Psoas muscle (tissue), 8 donors: ENCODE measurements at regions of chr7 and their contacts with region 1.

Region 1: DNA sequence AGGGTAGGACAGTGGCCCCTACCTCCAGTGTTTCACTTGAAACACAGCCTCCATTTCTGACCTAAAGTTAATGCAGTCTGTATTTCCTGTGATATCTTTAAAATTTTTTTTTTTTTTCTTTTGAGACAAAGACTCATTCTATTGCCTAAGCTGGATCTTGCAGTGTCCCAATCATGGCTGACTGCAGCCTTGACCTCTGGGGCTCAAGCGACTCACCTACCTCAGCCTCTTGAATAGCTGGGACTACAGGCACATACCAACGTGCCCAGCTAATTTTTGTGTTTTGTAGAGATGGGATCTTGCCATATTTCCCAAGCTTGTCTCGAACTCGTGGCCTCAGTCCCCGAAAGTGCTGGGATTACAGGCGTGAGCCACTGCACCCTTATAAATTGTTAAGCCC is 16.7 kb upstream of the MGAM2 start:
- DNase-seq: no peak
- ATAC-seq: no peak
- H3K4me3 ChIP-seq: no peak overlapping the region
- H3K27ac ChIP-seq: no peak overlapping the region
- H3K4me1 ChIP-seq: no peaks in the 10 kb centered on the region
- H3K27me3 ChIP-seq: no peaks in the 10 kb centered on the region
- CTCF ChIP-seq: no peak

Region 2: GRCh38 chr7:142063551-142064442 is 31.1 kb before region 1 on chr7:
- intact Hi-C with region 1: loop called (anchors 1 to 2 kb)
- DNase-seq: no peak
- ATAC-seq: no peak
- H3K4me3 ChIP-seq: no peak overlapping the region
- H3K27ac ChIP-seq: no peak overlapping the region
- H3K4me1 ChIP-seq: no peaks in the 10 kb centered on the region
- H3K27me3 ChIP-seq: no peaks in the 10 kb centered on the region
- CTCF ChIP-seq: no peak

Region 3: DNA sequence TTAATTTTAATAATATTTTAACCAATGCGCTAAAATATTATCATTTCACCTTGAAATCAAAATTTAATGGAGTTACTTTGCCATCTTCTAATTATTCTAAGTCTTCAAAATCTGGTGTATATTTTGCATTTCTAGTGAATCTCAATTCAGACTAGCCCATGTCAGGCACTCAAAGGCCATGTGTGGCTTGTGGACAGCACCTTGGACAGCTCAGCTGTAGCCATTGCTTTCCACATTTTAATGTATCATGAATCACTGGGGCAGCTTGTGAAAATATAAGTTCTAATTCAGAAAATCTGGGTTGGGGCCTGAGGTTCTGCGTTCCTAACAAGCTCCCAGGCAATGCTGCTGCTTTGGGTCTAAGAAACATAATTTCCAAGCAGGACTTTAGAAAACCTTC is 73.9 kb after region 1 on chr7:
- intact Hi-C with region 1: no loop called
- DNase-seq: no peak
- ATAC-seq: no peak
- H3K4me3 ChIP-seq: no peak overlapping the region
- H3K27ac ChIP-seq: no peak overlapping the region
- H3K4me1 ChIP-seq: no peaks in the 10 kb centered on the region
- H3K27me3 ChIP-seq: peaks cover 0 to 1% (median 0%) of the 10 kb centered on the region in 3 donors
- CTCF ChIP-seq: no peak